ENCODE measurements at regions of chr12 and their contacts with region 1.

Region 1: DNA sequence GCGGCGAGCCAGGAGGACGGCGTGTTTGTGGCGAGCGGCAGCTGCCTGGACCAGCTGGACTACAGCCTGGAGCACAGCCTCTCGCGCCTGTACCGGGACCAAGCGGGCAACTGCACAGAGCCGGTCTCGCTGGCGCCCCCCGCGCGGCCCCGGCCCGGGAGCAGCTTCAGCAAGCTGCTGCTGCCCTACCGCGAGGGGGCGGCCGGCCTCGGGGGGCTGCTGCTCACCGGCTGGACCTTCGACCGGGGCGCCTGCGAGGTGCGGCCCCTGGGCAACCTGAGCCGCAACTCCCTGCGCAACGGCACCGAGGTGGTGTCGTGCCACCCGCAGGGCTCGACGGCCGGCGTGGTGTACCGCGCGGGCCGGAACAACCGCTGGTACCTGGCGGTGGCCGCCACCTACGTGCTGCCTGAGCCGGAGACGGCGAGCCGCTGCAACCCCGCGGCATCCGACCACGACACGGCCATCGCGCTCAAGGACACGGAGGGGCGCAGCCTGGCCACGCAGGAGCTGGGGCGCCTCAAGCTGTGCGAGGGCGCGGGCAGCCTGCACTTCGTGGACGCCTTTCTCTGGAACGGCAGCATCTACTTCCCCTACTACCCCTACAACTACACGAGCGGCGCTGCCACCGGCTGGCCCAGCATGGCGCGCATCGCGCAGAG is 873 bp downstream of the PLXNC1 start:
- DNase-seq: peak; percentile 42
- H3K4me3 Mint-ChIP-seq: peak overlapping the region; percentile 80
- H3K27ac Mint-ChIP-seq: no peak overlapping the region
- H3K4me1 Mint-ChIP-seq: peaks cover 23% of the 10 kb centered on the region
- H3K27me3 Mint-ChIP-seq: peaks cover 9% of the 10 kb centered on the region

Region 2: GRCh38 chr12:92551853-92552397 is 1597.3 kb before region 1 on chr12:
- CTCF ChIA-PET with region 1: no interaction called
- intact Hi-C with region 1: no loop called
- DNase-seq: peak; percentile 83
- H3K4me3 Mint-ChIP-seq: no peak overlapping the region
- H3K27ac Mint-ChIP-seq: no peak overlapping the region
- H3K4me1 Mint-ChIP-seq: peaks cover 38% of the 10 kb centered on the region
- H3K27me3 Mint-ChIP-seq: no peaks in the 10 kb centered on the region

Region 3: DNA sequence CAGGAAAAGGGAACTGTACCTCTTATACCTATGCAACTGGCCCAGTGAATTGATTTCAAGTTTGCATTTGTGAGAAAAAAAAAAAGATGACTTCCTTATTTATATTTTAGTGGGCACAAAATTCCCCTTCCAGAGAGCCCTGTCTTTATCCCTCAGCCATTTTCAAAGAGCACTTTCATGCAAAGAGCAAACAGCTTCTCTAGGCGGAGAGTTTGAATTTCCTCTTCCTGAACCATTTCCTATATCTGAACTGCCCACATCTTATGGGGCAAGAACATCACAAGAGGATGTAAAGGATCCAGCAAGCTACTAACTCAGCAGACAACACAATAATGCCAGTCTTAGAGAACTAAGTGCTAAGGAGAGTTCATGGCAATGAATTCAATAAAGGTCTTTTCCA is 23.2 kb before region 1 on chr12:
- CTCF ChIA-PET with region 1: no interaction called
- intact Hi-C with region 1: no loop called
- DNase-seq: no peak
- H3K4me3 Mint-ChIP-seq: no peak overlapping the region
- H3K27ac Mint-ChIP-seq: no peak overlapping the region
- H3K4me1 Mint-ChIP-seq: peaks cover 47% of the 10 kb centered on the region
- H3K27me3 Mint-ChIP-seq: no peaks in the 10 kb centered on the region

Region 4: DNA sequence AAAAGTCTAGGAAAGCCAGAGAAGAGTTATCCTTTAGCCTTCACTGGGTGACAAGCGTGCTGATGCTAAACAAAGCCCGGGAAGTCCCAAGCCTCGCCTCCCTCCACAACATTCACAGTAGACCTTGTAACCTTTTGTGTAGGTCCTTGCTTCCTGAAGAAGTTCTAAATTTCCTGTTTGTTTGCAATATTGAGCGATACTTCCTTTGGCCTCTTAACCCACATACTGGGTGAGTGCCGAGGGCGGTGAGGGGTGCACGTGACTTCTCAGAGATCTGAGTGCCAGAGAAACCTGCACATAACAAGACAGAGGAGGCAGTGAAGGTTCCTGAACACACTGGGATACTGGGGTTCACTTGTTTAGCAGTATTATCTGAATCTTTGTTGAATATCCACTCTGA is 133.4 kb after region 1 on chr12:
- CTCF ChIA-PET with region 1: no interaction called
- intact Hi-C with region 1: loop called (anchors 5 kb)
- DNase-seq: peak; percentile 58
- H3K4me3 Mint-ChIP-seq: no peak overlapping the region
- H3K27ac Mint-ChIP-seq: peak overlapping the region; percentile 12
- H3K4me1 Mint-ChIP-seq: peaks cover 22% of the 10 kb centered on the region
- H3K27me3 Mint-ChIP-seq: no peaks in the 10 kb centered on the region

Region 5: GRCh38 chr12:94377599-94377998 is 228.3 kb after region 1 on chr12:
- CTCF ChIA-PET with region 1: no interaction called
- intact Hi-C with region 1: no loop called
- DNase-seq: no peak
- H3K4me3 Mint-ChIP-seq: no peak overlapping the region
- H3K27ac Mint-ChIP-seq: no peak overlapping the region
- H3K4me1 Mint-ChIP-seq: peaks cover 26% of the 10 kb centered on the region
- H3K27me3 Mint-ChIP-seq: no peaks in the 10 kb centered on the region

Region 6: GRCh38 chr12:94427501-94428381 is 278.5 kb after region 1 on chr12:
- CTCF ChIA-PET with region 1: no interaction called
- intact Hi-C with region 1: loop called (anchors 2 kb)
- DNase-seq: peak; percentile 45
- H3K4me3 Mint-ChIP-seq: peak overlapping the region; percentile 28
- H3K27ac Mint-ChIP-seq: peak overlapping the region; percentile 63
- H3K4me1 Mint-ChIP-seq: peaks cover 34% of the 10 kb centered on the region
- H3K27me3 Mint-ChIP-seq: no peaks in the 10 kb centered on the region

Region 7: DNA sequence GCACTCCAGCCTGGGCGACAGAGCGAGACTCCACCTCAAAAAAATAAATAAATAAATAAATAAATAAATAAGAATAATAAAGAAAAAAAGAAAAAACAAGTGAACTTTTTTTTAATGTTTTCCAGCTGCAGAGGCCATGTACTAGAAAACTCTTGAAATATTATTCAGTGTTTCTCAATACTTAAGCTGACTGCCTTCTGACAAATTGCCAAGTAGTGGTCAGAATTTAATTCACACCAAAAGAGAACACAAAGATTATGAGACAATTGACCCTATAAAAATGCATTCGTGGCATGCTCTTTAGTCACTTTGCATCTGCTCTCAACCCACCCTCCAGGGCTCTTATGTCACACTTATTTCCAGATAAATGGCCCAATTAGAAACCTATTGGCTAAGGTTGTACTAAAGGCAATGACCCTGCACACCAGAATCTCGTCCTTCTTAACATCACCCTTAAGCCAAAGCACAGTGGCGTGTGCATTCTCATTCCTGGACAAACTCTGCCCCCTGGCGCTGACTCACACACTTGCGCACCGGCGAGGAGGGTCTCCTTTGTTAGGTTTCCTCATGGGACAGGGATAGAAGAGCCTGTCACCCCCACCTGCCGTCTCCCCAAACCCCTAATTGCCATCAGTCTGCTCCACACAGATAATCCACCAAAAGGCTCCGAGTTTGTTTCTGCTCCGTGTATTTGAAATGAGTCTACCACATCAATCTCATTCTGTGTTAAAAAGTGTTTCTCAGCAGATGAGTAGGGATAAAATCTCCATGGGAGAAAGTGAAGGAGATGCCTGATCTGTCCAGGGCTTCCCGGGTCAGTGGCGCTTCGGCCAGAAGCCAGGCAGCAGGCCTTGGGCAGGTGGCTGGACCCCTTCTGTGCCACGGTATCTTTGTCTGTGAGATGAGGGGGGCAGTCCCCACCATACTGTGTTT is 383.5 kb after region 1 on chr12:
- CTCF ChIA-PET with region 1: interaction called, 6 read pairs
- intact Hi-C with region 1: loop called (anchors 1 kb)
- DNase-seq: peak; percentile 83
- H3K4me3 Mint-ChIP-seq: no peak overlapping the region
- H3K27ac Mint-ChIP-seq: no peak overlapping the region
- H3K4me1 Mint-ChIP-seq: no peaks in the 10 kb centered on the region
- H3K27me3 Mint-ChIP-seq: no peaks in the 10 kb centered on the region

Region 8: DNA sequence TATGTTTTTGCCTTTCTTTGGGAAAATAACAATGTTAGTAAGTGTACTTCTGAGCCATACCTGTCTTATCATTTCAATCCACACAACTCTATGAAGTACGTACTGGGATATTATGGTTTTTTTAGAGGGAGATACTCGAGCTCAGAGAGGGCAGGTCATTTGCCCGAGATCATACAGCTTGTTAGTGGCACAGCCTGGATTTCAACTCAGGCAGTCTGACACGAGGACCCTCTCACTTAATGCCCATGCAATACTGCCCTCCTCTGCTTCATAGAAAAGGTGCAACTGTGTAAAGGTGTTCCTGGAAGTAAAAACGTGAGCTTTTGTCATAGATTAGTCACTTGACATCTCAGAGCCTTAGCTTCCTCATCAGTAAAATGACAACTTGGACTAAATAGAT is 726.3 kb after region 1 on chr12:
- CTCF ChIA-PET with region 1: no interaction called
- intact Hi-C with region 1: loop called (anchors 1 kb)
- DNase-seq: peak; percentile 40
- H3K4me3 Mint-ChIP-seq: no peak overlapping the region
- H3K27ac Mint-ChIP-seq: no peak overlapping the region
- H3K4me1 Mint-ChIP-seq: peaks cover 21% of the 10 kb centered on the region
- H3K27me3 Mint-ChIP-seq: peaks cover 58% of the 10 kb centered on the region

Measured in activated naive CD4-positive, alpha-beta T cell treated with anti-CD3 and anti-CD28 coated beads for 36 hours (primary cell).